Tibial artery (tissue), 4 donors: ENCODE measurements at regions of chr18 and their contacts with region 1.

Region 1: DNA sequence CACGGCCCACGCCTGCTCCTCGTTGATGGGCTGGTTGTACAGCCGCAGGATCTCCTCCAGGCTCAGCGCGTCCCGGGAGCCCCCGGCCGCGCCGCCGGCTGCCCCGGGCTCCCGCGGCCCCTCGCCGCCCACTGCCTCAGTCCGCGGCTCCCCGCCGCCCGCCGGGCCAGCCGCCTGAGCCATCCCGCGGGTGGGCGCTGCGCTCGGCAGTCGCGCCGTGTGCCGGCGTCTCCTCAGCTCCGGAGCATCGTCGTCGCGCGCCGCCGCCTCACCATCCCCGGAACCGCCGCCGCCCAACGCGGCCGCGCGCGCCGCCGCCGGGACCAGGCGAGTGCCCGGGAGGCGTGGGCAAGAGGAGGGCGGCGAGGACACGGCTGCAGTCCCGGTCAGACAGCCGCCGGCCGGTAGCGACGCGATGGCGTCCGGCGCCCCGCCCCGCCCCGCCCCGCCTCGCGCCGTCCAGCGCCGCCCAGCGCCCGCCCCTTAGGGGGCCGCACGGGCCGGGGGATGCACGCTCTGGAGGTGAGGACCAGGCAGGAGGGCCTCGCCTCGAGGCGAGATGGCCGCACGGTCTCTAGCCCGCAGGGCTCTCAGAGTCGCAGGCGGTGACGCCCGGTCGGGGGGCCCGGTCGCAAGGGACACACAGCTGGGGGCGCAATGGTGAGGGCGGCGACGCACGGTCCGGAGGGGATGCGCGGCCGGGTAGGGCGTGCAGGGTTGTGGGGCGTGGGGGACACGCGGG is at the start of gene SPIRE1:
- DNase-seq: peak; percentile 76 to 90
- H3K4me3 ChIP-seq: peak within 1 kb of the TSS; percentile 77 to 83
- H3K27ac ChIP-seq: peak within 1 kb of the TSS; percentile 97 to 99
- H3K4me1 ChIP-seq: peaks cover 0 to 22% (median 10%) of the 10 kb centered on the region in 4 donors
- H3K27me3 ChIP-seq: no peaks in the 10 kb centered on the region
- CTCF ChIP-seq: no peak

Region 2: GRCh38 chr18:12271376-12272235 is 386.2 kb before region 1 on chr18:
- intact Hi-C with region 1: loop called (anchors 10 kb)
- DNase-seq: peak; percentile 44 to 86
- H3K4me3 ChIP-seq: peak overlapping the region; percentile 49 to 50
- H3K27ac ChIP-seq: peak overlapping the region; percentile 63 to 79
- H3K4me1 ChIP-seq: peaks cover 0 to 11% (median 4%) of the 10 kb centered on the region in 4 donors
- H3K27me3 ChIP-seq: no peaks in the 10 kb centered on the region
- CTCF ChIP-seq: peak; percentile 74 to 79

Region 3: GRCh38 chr18:12391618-12392165 is 266.2 kb before region 1 on chr18:
- intact Hi-C with region 1: loop called (anchors 2 kb)
- DNase-seq: peak; percentile 58 to 74
- H3K4me3 ChIP-seq: no peak overlapping the region
- H3K27ac ChIP-seq: no peak overlapping the region
- H3K4me1 ChIP-seq: no peaks in the 10 kb centered on the region
- H3K27me3 ChIP-seq: no peaks in the 10 kb centered on the region
- CTCF ChIP-seq: peak; percentile 90 to 92

Region 4: GRCh38 chr18:12408247-12408869 is 249.5 kb before region 1 on chr18:
- intact Hi-C with region 1: loop called (anchors 5 kb)
- DNase-seq: no peak
- H3K4me3 ChIP-seq: peak overlapping the region; percentile 65 to 70
- H3K27ac ChIP-seq: peak overlapping the region; percentile 83 to 85
- H3K4me1 ChIP-seq: peaks cover 0 to 33% (median 11%) of the 10 kb centered on the region in 4 donors
- H3K27me3 ChIP-seq: no peaks in the 10 kb centered on the region
- CTCF ChIP-seq: no peak

Region 5: GRCh38 chr18:12559319-12559718 is 98.5 kb before region 1 on chr18:
- intact Hi-C with region 1: no loop called
- DNase-seq: no peak
- H3K4me3 ChIP-seq: no peak overlapping the region
- H3K27ac ChIP-seq: no peak overlapping the region
- H3K4me1 ChIP-seq: no peaks in the 10 kb centered on the region
- H3K27me3 ChIP-seq: no peaks in the 10 kb centered on the region
- CTCF ChIP-seq: no peak

Region 6: DNA sequence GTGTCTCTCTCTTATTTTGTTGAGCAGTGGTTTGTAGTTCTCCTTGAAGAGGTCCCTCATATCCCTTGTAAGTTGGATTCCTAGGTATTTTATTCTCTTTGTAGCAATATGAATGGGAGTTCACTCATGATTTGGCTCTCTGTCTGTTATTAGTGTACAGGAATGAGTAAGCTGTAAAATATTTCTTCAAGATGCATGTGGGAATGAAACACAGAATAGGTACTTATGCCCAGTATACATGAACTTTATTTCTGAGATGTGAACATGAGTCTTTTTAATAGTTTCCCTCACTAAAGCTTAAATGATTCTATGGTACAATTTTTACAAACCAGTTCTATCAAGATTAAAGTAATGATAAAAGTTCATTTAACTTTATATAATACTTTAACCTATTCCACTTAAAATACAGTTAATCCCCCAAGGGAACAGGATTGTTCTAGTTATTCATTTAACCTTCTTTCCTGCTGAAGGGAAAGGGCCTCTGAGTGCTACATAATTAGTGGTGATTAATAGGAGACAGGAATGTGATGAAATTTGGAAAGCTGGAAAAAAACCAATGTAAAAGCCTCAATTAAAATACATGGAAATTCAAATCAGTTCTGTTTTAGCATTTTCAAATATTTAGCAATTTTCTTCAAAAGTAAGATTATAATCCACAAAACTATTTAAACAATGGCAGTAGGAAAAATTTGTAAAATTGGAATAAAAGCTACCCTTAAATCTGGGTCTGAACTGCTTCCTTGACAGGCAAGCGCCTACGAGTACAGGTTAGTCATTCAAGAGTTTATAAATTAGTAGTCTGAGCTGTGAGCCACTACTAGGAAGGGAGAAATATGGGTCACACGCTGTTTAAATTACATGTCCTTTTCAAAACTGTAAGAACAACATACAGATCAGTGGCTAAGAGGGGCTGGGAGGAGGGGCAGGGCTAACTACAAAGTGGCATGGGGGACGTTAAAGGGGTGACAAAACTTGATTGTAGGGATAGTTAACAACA is 28.9 kb before region 1 on chr18:
- intact Hi-C with region 1: no loop called
- DNase-seq: no peak
- H3K4me3 ChIP-seq: no peak overlapping the region
- H3K27ac ChIP-seq: no peak overlapping the region
- H3K4me1 ChIP-seq: peaks cover 0 to 6% (median 0%) of the 10 kb centered on the region in 4 donors
- H3K27me3 ChIP-seq: no peaks in the 10 kb centered on the region
- CTCF ChIP-seq: no peak